Activated CD4-positive, alpha-beta T cell treated with anti-CD3 and anti-CD28 coated beads, Interleukin-2, amount 10 ng/mL, durations not matched to agents 24 days and 14 days (primary cell): ENCODE measurements at regions of chr2 and their contacts with region 1.

Region 1: GRCh38 chr2:8544786-8545694 is 136.8 kb upstream of the ID2 start:
- DNase-seq: peak; percentile 95
- H3K4me3 Mint-ChIP-seq: peak overlapping the region; percentile 64
- H3K27ac Mint-ChIP-seq: peak overlapping the region; percentile 99
- H3K4me1 Mint-ChIP-seq: peaks cover 80% of the 10 kb centered on the region
- H3K27me3 Mint-ChIP-seq: no peaks in the 10 kb centered on the region

Region 2: GRCh38 chr2:7427293-7428060 is 1117.6 kb before region 1 on chr2:
- intact Hi-C with region 1: loop called (anchors 2 kb)
- DNase-seq: peak; percentile 86
- H3K4me3 Mint-ChIP-seq: peak overlapping the region; percentile 27
- H3K27ac Mint-ChIP-seq: peak overlapping the region; percentile 83
- H3K4me1 Mint-ChIP-seq: peaks cover 42% of the 10 kb centered on the region
- H3K27me3 Mint-ChIP-seq: no peaks in the 10 kb centered on the region

Region 3: DNA sequence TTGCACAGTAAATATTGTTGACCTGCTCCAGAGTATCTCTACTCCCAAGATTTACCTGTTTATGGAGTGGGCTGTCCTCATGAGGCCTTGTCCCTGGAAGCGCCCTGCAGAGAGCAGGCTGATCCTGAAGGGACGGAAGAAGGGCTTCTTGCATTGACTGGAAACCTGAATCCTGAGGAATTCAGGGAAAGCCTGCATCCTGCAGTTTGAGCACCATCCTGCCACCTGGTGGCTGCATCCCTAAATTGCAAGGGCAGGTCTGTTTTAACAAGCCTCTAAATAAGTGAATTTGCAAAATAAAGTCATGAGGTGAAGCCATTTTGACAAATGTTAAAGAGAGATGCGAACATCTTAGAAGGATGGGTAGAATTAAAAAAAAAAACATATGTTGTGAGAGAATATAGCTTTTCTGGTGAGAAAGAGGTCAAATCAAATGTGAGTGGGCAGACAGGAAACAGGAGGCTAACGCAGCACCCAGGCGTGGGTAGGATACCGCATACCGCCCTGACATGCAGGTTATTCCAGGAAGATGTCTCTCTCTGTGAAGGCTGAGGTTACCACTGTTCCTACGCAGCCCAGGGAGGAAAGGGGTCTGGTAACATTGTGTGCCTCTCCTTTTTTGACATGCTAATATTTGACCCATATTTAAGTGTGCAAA is 872.9 kb before region 1 on chr2:
- intact Hi-C with region 1: loop called (anchors 2 kb)
- DNase-seq: peak; percentile 85
- H3K4me3 Mint-ChIP-seq: peak overlapping the region; percentile 70
- H3K27ac Mint-ChIP-seq: peak overlapping the region; percentile 98
- H3K4me1 Mint-ChIP-seq: peaks cover 60% of the 10 kb centered on the region
- H3K27me3 Mint-ChIP-seq: no peaks in the 10 kb centered on the region

Region 4: DNA sequence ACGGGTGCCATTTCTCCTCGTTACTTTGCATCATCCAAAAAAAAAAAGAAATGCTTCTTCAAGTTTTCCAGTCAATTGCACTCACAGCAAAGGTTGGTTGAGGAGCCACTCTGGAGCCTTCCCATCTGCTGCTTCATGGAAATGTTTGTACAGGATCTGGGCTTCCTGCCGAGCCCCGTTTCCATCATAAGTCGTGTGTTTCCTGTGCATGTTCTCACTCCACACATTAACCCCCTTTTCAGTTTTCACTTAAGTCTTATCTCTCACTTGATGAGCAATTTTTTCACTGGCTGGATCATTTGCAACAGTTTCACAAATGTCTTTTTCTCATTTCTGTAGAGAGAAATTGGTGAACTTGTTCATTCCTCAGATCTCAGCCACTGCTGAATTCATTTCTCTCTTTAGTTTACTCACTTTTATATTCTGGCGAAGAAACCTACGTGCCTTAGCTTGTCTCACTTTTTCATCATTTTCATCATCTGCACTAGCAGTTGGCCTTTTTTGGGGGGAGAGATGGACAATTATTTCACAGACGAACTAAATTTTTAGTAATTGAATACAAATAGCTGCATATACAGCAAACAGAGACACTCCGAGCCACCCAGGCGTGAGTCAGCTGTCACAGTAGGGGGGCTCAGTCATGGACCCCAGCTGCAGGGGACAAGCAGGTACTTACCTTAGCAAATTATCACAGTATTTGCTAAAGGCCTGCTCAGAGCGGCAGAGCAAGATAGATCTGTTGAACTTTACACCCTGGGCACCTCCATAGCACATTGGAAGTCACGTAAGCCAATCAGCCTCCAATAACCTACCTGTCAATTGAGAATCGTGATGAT is 614.0 kb before region 1 on chr2:
- intact Hi-C with region 1: loop called (anchors 1 kb)
- DNase-seq: peak; percentile 54
- H3K4me3 Mint-ChIP-seq: peak overlapping the region; percentile 1
- H3K27ac Mint-ChIP-seq: peak overlapping the region; percentile 76
- H3K4me1 Mint-ChIP-seq: peaks cover 10% of the 10 kb centered on the region
- H3K27me3 Mint-ChIP-seq: no peaks in the 10 kb centered on the region

Region 5: GRCh38 chr2:8303322-8303832 is 241.7 kb before region 1 on chr2:
- intact Hi-C with region 1: loop called (anchors 1 kb)
- DNase-seq: peak; percentile 94
- H3K4me3 Mint-ChIP-seq: peak overlapping the region; percentile 71
- H3K27ac Mint-ChIP-seq: peak overlapping the region; percentile 83
- H3K4me1 Mint-ChIP-seq: peaks cover 72% of the 10 kb centered on the region
- H3K27me3 Mint-ChIP-seq: no peaks in the 10 kb centered on the region

Region 6: GRCh38 chr2:8488001-8488738 is 56.9 kb before region 1 on chr2:
- intact Hi-C with region 1: loop called (anchors 2 kb)
- DNase-seq: peak; percentile 84
- H3K4me3 Mint-ChIP-seq: peak overlapping the region; percentile 68
- H3K27ac Mint-ChIP-seq: peak overlapping the region; percentile 80
- H3K4me1 Mint-ChIP-seq: peaks cover 48% of the 10 kb centered on the region
- H3K27me3 Mint-ChIP-seq: no peaks in the 10 kb centered on the region

Region 7: GRCh38 chr2:8525582-8526402 is 19.2 kb before region 1 on chr2:
- intact Hi-C with region 1: no loop called
- DNase-seq: no peak
- H3K4me3 Mint-ChIP-seq: no peak overlapping the region
- H3K27ac Mint-ChIP-seq: no peak overlapping the region
- H3K4me1 Mint-ChIP-seq: peaks cover 40% of the 10 kb centered on the region
- H3K27me3 Mint-ChIP-seq: no peaks in the 10 kb centered on the region

Region 8: DNA sequence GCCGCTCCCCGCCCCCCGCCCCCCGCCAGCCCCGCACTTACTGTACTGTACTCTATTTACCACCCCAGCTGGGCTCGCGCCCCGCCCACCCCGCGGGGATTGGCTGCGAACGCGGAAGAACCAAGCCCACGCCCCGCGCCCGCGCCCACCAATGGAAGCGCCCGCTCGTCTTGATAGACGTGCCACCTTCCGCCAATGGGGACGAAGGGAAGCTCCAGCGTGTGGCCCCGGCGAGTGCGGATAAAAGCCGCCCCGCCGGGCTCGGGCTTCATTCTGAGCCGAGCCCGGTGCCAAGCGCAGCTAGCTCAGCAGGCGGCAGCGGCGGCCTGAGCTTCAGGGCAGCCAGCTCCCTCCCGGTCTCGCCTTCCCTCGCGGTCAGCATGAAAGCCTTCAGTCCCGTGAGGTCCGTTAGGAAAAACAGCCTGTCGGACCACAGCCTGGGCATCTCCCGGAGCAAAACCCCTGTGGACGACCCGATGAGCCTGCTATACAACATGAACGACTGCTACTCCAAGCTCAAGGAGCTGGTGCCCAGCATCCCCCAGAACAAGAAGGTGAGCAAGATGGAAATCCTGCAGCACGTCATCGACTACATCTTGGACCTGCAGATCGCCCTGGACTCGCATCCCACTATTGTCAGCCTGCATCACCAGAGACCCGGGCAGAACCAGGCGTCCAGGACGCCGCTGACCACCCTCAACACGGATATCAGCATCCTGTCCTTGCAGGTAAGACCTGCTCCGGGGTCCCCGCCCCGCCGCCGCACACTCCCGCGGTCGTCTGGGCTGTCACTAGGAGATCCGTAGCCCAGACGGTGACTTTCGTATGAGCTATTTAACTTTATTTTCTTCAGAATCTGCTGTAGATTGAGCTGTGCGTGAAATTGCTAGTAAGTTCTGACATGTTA is 137.0 kb after region 1 on chr2 and contains the start of gene ID2:
- intact Hi-C with region 1: loop called (anchors 1 kb)
- DNase-seq: peak; percentile 100
- H3K4me3 Mint-ChIP-seq: peak within 1 kb of the TSS; percentile 98
- H3K27ac Mint-ChIP-seq: peak within 1 kb of the TSS; percentile 97
- H3K4me1 Mint-ChIP-seq: peaks cover 37% of the 10 kb centered on the region
- H3K27me3 Mint-ChIP-seq: peaks cover 13% of the 10 kb centered on the region
- total RNA-seq, gene ID2: 284 and 299 TPM in 2 replicates

Region 9: GRCh38 chr2:8729939-8730338 is 184.9 kb after region 1 on chr2:
- intact Hi-C with region 1: no loop called
- DNase-seq: no peak
- H3K4me3 Mint-ChIP-seq: no peak overlapping the region
- H3K27ac Mint-ChIP-seq: no peak overlapping the region
- H3K4me1 Mint-ChIP-seq: peaks cover 2% of the 10 kb centered on the region
- H3K27me3 Mint-ChIP-seq: no peaks in the 10 kb centered on the region